Activated T-helper 1 cell treated with anti-CD3 and anti-CD28 coated beads, Interleukin-12 subunit alpha, Interleukin-12 subunit beta, Interleukin-2, Interleukin-4 antibody, amounts not matched to agents 30 ng/mL and 10 ng/mL and 1 ng/mL, durations not matched to agents 14 hours and 24 hours and 36 hours (primary cell): ENCODE measurements at regions of chr10 and their contacts with region 1.

Region 1: DNA sequence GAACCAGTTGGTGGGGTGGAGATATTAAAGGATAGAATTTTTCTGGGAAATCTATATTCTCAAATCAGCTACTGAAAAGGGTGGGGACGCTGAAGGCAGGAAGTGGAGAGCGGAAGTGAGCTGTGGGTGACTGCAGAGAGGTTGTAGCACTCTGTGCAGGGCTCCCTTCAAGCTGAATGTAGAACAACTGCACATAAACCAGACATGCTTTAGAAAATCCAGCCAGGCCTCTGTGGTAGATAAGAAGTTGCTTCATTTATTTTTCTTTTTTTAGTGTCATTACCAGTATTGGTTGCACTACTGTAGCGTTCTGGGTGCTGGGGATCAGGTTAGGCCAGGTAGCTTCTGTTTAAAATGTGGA is 127.8 kb downstream of the CELF2 start:
- DNase-seq: peak; percentile 61
- H3K4me3 Mint-ChIP-seq: peak overlapping the region; percentile 82
- H3K27ac Mint-ChIP-seq: peak overlapping the region; percentile 98
- H3K4me1 Mint-ChIP-seq: peaks cover 92% of the 10 kb centered on the region
- H3K27me3 Mint-ChIP-seq: no peaks in the 10 kb centered on the region

Region 2: GRCh38 chr10:10959666-10960065 is 185.8 kb before region 1 on chr10:
- intact Hi-C with region 1: no loop called
- DNase-seq: no peak
- H3K4me3 Mint-ChIP-seq: no peak overlapping the region
- H3K27ac Mint-ChIP-seq: no peak overlapping the region
- H3K4me1 Mint-ChIP-seq: no peaks in the 10 kb centered on the region
- H3K27me3 Mint-ChIP-seq: peaks cover 5% of the 10 kb centered on the region

Region 3: DNA sequence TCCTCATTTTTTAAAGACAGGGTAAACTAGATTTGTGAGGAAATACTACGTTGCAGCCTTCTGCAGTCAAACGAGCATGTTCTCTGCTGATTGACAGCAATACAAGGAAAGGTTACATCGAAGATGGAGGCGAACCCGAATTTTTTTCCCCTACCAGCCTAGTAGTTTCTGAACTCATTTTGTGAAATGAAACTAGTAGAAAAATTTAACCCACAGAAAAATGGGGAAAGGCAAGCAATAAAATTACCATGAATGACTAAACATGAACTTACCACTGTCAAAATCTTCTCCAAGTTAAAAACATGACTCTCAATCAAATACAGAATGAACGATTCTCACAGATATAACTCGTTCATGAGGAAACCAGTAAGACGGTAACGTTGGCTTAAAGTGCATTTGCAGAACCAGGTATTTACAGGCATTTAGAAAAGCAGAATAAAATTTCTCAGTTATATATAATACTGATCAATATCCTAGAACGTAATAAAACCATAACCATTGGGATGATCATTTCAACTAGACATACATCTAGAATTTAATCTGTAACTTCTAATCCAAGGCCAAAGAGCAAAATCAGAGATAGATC is 53.9 kb before region 1 on chr10:
- intact Hi-C with region 1: loop called (anchors 5 kb)
- DNase-seq: no peak
- H3K4me3 Mint-ChIP-seq: no peak overlapping the region
- H3K27ac Mint-ChIP-seq: no peak overlapping the region
- H3K4me1 Mint-ChIP-seq: no peaks in the 10 kb centered on the region
- H3K27me3 Mint-ChIP-seq: peaks cover 24% of the 10 kb centered on the region

Region 4: DNA sequence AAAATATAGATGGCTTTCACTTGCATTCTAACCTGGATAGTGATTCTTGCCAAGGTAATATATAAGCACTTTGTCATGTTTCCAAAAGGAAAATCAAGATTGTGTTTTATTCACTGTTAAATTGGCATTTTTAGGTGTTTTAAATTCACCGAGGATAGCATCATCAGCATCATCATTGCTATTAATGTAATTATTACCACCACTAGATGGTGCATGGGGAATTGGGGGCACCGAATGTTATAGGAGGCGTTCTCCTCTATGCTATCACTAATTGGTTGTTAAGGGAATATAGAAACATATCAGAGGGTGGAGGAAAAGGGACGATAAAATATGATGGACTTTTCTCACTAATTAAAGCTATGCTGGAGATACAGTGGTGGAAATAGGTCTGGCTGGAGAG is 32.3 kb before region 1 on chr10:
- intact Hi-C with region 1: loop called (anchors 2 kb)
- DNase-seq: no peak
- H3K4me3 Mint-ChIP-seq: no peak overlapping the region
- H3K27ac Mint-ChIP-seq: no peak overlapping the region
- H3K4me1 Mint-ChIP-seq: peaks cover 12% of the 10 kb centered on the region
- H3K27me3 Mint-ChIP-seq: peaks cover 4% of the 10 kb centered on the region

Region 5: DNA sequence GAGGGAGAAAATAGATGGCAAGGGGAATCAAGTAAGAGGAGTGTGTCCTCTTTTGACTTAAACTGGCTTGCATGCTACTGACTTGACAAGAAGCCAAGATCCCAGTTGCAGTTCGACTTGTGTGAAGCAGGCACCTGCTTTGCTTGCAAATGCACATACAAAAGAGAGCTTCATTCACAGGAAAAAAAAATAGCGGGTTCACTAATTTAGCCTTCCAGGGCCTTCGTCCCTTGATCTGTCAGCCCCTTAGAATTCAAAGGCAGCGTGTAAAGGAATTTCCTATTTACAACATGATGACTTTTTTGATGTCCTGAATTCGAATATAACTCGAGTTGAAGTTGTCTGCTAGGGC is 64.3 kb after region 1 on chr10:
- intact Hi-C with region 1: loop called (anchors 2 kb)
- DNase-seq: no peak
- H3K4me3 Mint-ChIP-seq: peak overlapping the region; percentile 76
- H3K27ac Mint-ChIP-seq: peak overlapping the region; percentile 96
- H3K4me1 Mint-ChIP-seq: peaks cover 98% of the 10 kb centered on the region
- H3K27me3 Mint-ChIP-seq: peaks cover 1% of the 10 kb centered on the region